ENCODE measurements at regions of chr2 and their contacts with region 1.

Region 1: GRCh38 chr2:188978291-188979081 is 4.3 kb downstream of the COL3A1 start:
- DNase-seq: peak in 1 of 2 donors; percentile 43
- H3K4me3 ChIP-seq: peak overlapping the region; percentile 65 to 68
- H3K27ac ChIP-seq: peak overlapping the region; percentile 90
- H3K4me1 ChIP-seq: peaks cover 0 to 52% (median 3%) of the 10 kb centered on the region in 4 donors
- H3K27me3 ChIP-seq: no peaks in the 10 kb centered on the region
- CTCF ChIP-seq: peak in 1 of 2 experiments; percentile 39

Region 2: GRCh38 chr2:188291617-188292347 is 686.7 kb before region 1 on chr2 and contains the start of gene GULP1:
- intact Hi-C with region 1: loop called (anchors 5 kb)
- DNase-seq: peak; percentile 71 to 87
- H3K4me3 ChIP-seq: peak within 1 kb of the TSS; percentile 74 to 83
- H3K27ac ChIP-seq: peak within 1 kb of the TSS; percentile 95 to 97
- H3K4me1 ChIP-seq: peaks cover 0 to 38% (median 13%) of the 10 kb centered on the region in 4 donors
- H3K27me3 ChIP-seq: no peaks in the 10 kb centered on the region
- CTCF ChIP-seq: peak; percentile 55 to 64

Region 3: GRCh38 chr2:188524519-188525113 is 453.9 kb before region 1 on chr2:
- intact Hi-C with region 1: loop called (anchors 2 kb)
- DNase-seq: no peak
- H3K4me3 ChIP-seq: no peak overlapping the region
- H3K27ac ChIP-seq: peak overlapping the region in 1 of 2 donors; percentile 60
- H3K4me1 ChIP-seq: peaks cover 0 to 45% (median 6%) of the 10 kb centered on the region in 4 donors
- H3K27me3 ChIP-seq: no peaks in the 10 kb centered on the region
- CTCF ChIP-seq: peak; percentile 65 to 74

Region 4: GRCh38 chr2:188788621-188789020 is 189.9 kb before region 1 on chr2:
- intact Hi-C with region 1: loop called (anchors 10 kb)
- DNase-seq: peak; percentile 84 to 89
- H3K4me3 ChIP-seq: no peak overlapping the region
- H3K27ac ChIP-seq: peak overlapping the region; percentile 75
- H3K4me1 ChIP-seq: peaks cover 0 to 52% (median 10%) of the 10 kb centered on the region in 4 donors
- H3K27me3 ChIP-seq: no peaks in the 10 kb centered on the region
- CTCF ChIP-seq: no peak

Region 5: DNA sequence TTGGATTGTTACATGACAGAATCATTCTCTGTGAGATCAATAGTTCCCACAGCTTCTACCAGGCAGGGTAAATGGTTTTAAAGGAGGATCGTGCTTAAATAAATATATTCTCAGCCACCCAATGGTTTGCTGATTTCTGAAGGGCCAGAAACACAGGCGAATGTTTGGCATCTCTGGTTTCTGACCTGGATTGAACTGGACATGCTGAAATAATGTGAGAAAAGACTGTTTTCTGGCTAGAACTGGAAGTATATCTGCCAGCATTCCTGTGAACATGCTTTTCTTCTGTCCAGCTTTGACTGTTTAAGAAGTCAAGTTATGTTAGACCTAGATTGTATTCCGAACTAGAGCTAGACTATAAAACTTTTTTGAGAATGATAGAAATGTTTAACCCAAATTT is 81.4 kb before region 1 on chr2:
- intact Hi-C with region 1: loop called (anchors 10 kb)
- DNase-seq: no peak
- H3K4me3 ChIP-seq: peak overlapping the region; percentile 15 to 27
- H3K27ac ChIP-seq: peak overlapping the region; percentile 67 to 79
- H3K4me1 ChIP-seq: peaks cover 0 to 51% (median 8%) of the 10 kb centered on the region in 4 donors
- H3K27me3 ChIP-seq: no peaks in the 10 kb centered on the region
- CTCF ChIP-seq: no peak

Region 6: GRCh38 chr2:189267925-189268579 is 289.6 kb after region 1 on chr2:
- intact Hi-C with region 1: no loop called
- DNase-seq: no peak
- H3K4me3 ChIP-seq: no peak overlapping the region
- H3K27ac ChIP-seq: peak overlapping the region; percentile 18 to 27
- H3K4me1 ChIP-seq: peaks cover 0 to 12% (median 5%) of the 10 kb centered on the region in 4 donors
- H3K27me3 ChIP-seq: no peaks in the 10 kb centered on the region
- CTCF ChIP-seq: no peak